Caco-2 (cell line): ENCODE measurements at regions of chr17 and their contacts with region 1.

Region 1: DNA sequence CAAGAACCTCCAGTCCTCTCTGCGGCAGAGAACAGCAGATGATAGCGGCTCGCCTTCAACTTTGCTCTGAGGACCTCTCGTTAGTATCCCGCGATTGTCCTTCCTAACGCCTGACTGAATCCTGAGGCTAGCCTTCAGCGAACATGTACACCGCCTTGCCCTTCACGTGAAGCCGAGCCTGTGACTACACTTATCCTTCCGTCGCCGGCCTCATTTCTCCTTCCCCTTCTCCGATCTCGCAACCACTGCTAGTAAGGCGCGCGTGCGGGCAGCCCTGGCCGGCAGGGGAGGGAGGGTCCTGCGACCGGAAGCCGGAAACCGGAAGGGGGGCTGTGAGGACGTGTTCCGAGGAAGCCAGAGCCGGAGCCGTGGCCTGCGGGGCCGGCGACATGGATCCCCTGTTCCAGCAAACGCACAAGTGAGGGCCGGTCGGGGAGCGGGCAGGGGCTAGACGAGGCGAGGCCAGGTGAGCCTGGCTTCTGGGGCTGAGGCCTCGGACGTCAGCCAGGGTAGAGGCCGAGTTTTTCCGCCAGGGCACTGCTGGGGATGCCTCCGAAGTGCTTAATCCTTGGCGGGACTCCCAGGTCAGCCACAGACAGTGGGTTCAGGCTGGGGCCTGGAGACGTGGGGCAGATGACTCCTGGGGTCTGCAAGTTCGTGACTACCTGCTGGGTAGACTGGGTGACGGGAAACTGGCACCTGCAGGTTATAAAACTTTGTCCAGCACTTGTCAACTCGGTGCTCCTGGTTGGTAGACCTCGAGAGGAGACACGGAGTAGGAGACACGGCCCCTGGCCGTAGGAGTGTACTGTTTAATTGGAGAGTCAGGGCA is at the start of gene GOSR2:
- DNase-seq: peak; percentile 93 to 95
- H3K4me3 ChIP-seq: peak within 1 kb of the TSS; percentile 89
- H3K4me3 Mint-ChIP-seq: peak within 1 kb of the TSS; percentile 93
- H3K27ac Mint-ChIP-seq: peak within 1 kb of the TSS; percentile 100
- H3K4me1 ChIP-seq: peaks cover 18% of the 10 kb centered on the region
- H3K4me1 Mint-ChIP-seq: peaks cover 6% of the 10 kb centered on the region
- H3K27me3 ChIP-seq: no peaks in the 10 kb centered on the region
- H3K27me3 Mint-ChIP-seq: no peaks in the 10 kb centered on the region
- CTCF ChIP-seq: no peak
- total RNA-seq, gene GOSR2: 84.0 and 84.1 TPM in 2 replicates

Region 2: DNA sequence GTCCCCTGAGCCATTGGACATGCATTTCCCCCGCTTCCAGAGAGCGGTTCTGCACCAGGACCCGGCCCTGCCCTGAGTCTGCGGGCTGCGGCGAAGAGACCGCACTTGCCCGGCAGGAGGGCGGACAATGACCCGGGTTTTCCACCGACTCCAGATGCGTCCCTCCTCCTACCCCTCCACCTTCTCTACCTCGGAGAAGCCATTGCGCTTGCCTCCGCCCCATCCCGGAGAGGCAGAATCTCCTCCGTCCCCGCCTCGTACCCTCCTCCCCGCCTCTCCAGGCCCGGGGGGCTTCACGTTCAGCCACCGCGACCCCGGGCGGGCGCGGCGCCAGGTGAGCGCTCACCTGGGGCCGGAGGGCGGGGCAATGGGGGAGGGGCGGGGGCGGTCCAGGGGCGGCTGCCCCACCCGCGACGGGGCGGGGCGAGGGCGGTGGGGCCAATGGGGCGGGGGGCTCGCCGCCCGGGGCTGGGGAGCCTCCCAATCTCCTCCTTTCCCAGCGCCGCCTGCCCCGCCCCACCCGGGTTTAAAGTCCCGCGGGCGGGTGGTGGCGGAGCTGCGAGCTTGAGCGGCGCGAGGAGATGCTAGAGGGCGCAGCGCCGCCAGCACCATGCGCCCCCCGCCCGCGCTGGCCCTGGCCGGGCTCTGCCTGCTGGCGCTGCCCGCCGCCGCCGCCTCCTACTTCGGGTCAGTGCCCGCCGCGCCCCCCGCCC is 71.8 kb before region 1 on chr17 and contains the start of gene WNT9B:
- CTCF ChIA-PET with region 1: no interaction called
- POLR2A ChIA-PET with region 1: no interaction called
- intact Hi-C with region 1: loop called (anchors 5 kb)
- DNase-seq: peak; percentile 90 to 95
- H3K4me3 ChIP-seq: peak within 1 kb of the TSS; percentile 66
- H3K4me3 Mint-ChIP-seq: peak within 1 kb of the TSS; percentile 86
- H3K27ac Mint-ChIP-seq: no peak within 1 kb of the TSS
- H3K4me1 ChIP-seq: peaks cover 12% of the 10 kb centered on the region
- H3K4me1 Mint-ChIP-seq: peaks cover 6% of the 10 kb centered on the region
- H3K27me3 ChIP-seq: no peaks in the 10 kb centered on the region
- H3K27me3 Mint-ChIP-seq: peaks cover 15% of the 10 kb centered on the region
- CTCF ChIP-seq: peak in 1 of 2 experiments; percentile 17
- total RNA-seq, gene WNT9B: not detected in 2 replicates